Dendritic cell treated with granulocyte-macrophage colony-stimulating factor and Interleukin-4, amounts not matched to agents 40 ng/mL and 50 ng/mL, for 4 days (primary cell): ENCODE measurements at regions of chr20 and their contacts with region 1.

Region 1: DNA sequence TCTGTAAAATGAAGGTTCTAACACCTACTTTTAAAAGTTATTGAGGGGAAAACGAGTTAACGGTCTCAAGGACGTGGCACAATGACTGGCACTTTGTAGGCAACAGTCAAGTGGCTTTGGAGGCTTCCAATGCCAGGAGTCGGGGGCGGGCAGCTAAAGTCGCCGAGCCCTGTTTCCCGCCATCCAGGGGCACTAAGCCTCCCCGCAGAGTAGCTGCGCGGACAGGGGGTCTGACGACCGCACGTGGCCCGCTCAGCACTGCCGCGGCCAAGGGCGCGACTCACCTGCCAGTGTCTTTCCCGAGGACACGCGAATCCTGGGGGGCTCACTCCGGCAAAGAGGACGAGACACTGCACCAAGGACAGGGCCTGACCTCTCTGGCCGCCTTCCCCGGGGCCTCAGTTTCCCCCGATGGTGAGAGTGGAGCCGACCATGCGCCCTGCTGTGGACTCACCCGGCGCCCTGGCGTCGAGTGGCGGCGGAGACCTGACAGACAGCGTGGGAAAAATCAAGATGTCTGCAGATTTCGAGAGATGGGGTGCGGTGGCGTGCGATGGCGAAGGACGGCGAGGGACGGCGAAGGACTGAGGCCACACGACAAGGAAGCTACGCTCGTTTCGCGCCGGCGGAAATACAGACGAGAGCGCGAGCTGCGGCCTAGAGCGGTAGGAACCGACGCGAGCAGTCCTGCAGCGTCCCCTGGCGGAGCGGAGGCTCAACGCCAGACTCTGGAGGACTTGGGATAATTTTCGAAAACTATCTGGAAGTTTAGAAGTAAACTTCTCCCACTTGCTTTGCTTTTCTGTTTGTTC is at the start of gene SNHG17:
- H3K4me3 Mint-ChIP-seq: peak within 1 kb of the TSS; percentile 88
- H3K27ac Mint-ChIP-seq: peak within 1 kb of the TSS; percentile 91
- H3K4me1 Mint-ChIP-seq: peaks cover 37% of the 10 kb centered on the region
- H3K27me3 Mint-ChIP-seq: peaks cover 8% of the 10 kb centered on the region

Region 2: DNA sequence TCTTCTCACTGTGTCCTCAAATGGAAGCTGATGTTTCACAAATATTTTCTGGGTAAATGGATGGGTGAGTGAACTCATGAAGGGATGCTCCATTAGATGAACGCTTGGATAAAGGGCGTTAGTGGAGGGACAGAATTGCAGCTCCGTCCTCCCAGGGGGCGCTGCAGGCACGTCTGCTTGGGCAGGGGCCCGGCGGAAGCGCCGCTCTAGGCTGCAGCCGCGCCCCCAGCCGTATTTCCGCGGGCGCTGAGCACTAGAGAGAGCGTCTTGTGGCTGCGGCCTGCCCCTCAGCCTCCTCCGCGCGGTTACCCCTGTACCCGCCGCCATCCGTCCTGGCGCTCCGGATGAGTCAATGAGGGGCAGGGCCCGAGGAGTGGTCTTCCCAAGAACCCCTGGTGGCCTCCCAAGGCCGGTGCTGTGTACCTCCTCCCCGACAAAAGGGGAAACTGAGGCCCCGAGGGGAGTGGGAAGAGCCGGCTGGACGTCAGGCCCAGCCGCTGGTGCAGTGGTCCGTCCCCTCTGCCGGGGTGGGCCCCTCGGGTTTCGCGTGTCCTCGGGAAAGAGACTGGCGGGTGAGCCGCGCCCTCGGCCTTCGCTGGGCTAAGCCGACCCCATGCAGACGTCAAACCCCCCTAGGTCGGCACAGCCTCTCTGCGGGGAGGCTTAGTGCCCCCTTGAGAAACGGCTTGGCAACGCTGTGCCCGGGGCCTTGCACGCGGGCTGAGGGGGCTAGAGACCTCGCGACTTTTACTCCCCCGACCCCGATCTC is 11.7 kb after region 1 on chr20:
- intact Hi-C with region 1: loop called (anchors 1 kb)
- H3K4me3 Mint-ChIP-seq: peak overlapping the region; percentile 84
- H3K27ac Mint-ChIP-seq: peak overlapping the region; percentile 88
- H3K4me1 Mint-ChIP-seq: peaks cover 29% of the 10 kb centered on the region
- H3K27me3 Mint-ChIP-seq: peaks cover 14% of the 10 kb centered on the region